CD4-positive, alpha-beta memory T cell (primary cell): ENCODE measurements at regions of chr3 and their contacts with region 1.

Region 1: GRCh38 chr3:158727206-158728060 is 4.8 kb downstream of the RARRES1 start:
- DNase-seq: peak; percentile 45 to 65 (median 63)
- H3K4me3 ChIP-seq: peak overlapping the region in 1 of 2 donors; percentile 3
- H3K4me3 Mint-ChIP-seq: peak overlapping the region in 7 of 8 donors; percentile 17 to 82 (median 62)
- H3K27ac ChIP-seq: no peak overlapping the region
- H3K27ac Mint-ChIP-seq: peak overlapping the region; percentile 37 to 98 (median 87)
- H3K4me1 ChIP-seq: peaks cover 37% of the 10 kb centered on the region
- H3K4me1 Mint-ChIP-seq: peaks cover 26 to 51% (median 43%) of the 10 kb centered on the region in 4 donors
- H3K27me3 ChIP-seq: no peaks in the 10 kb centered on the region
- H3K27me3 Mint-ChIP-seq: peaks cover 0 to 2% of the 10 kb centered on the region in 2 donors

Region 2: DNA sequence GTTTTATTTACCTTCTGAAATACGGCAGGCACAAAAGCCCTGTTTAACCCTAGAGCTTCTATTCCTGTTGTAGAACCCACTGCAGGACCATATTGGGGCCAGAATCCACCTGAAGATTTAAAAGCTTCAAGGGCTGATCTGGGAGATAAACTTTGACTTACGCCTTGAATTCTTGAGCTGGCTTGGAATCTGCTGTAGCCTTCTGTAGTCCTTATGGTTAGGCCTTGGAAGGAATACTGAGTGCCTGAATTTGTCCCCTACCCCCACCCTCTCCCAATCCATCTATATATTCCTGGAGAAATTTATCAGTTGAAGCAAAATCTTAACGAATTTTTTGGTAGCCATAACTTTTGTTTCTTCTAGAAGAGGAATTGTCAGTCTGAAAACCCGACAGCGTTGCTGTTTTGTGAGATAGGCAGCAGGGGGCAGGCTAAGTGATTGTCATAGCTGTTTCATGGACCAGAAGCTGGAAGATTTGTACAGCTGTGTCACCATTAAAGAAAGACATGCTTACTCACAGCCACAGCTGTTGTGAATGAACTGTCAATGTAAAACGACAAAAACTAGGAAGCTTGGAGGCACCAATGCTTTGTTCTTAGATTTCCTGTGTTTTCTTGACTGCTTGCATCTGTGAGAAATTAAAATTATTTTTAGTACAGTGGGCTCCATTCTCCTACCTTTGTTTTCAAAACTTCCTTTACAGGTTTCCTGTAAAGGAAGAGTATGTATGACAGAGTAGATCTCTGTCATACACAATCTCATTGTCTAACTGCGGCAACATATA is 67.8 kb before region 1 on chr3:
- CTCF ChIA-PET with region 1: interaction called, 36 read pairs
- POLR2A ChIA-PET with region 1: interaction called, 3 read pairs
- intact Hi-C with region 1: loop called (anchors 1 kb)
- DNase-seq: peak in 4 of 5 donors; percentile 48 to 55 (median 51)
- H3K4me3 ChIP-seq: no peak overlapping the region
- H3K4me3 Mint-ChIP-seq: no peak overlapping the region
- H3K27ac ChIP-seq: no peak overlapping the region
- H3K27ac Mint-ChIP-seq: peak overlapping the region in 6 of 7 donors; percentile 13 to 80 (median 37)
- H3K4me1 ChIP-seq: no peaks in the 10 kb centered on the region
- H3K4me1 Mint-ChIP-seq: peaks cover 5 to 9% (median 7%) of the 10 kb centered on the region in 4 donors
- H3K27me3 ChIP-seq: no peaks in the 10 kb centered on the region
- H3K27me3 Mint-ChIP-seq: no peaks in the 10 kb centered on the region

Region 3: GRCh38 chr3:158713094-158713499 is 14.3 kb before region 1 on chr3:
- CTCF ChIA-PET with region 1: interaction called, 15 read pairs
- POLR2A ChIA-PET with region 1: interaction called, 3 read pairs
- intact Hi-C with region 1: no loop called
- DNase-seq: no peak
- H3K4me3 ChIP-seq: no peak overlapping the region
- H3K4me3 Mint-ChIP-seq: no peak overlapping the region
- H3K27ac ChIP-seq: no peak overlapping the region
- H3K27ac Mint-ChIP-seq: peak overlapping the region in 1 of 7 donors; percentile 57
- H3K4me1 ChIP-seq: no peaks in the 10 kb centered on the region
- H3K4me1 Mint-ChIP-seq: peaks cover 0 to 8% (median 2%) of the 10 kb centered on the region in 4 donors
- H3K27me3 ChIP-seq: no peaks in the 10 kb centered on the region
- H3K27me3 Mint-ChIP-seq: no peaks in the 10 kb centered on the region

Region 4: DNA sequence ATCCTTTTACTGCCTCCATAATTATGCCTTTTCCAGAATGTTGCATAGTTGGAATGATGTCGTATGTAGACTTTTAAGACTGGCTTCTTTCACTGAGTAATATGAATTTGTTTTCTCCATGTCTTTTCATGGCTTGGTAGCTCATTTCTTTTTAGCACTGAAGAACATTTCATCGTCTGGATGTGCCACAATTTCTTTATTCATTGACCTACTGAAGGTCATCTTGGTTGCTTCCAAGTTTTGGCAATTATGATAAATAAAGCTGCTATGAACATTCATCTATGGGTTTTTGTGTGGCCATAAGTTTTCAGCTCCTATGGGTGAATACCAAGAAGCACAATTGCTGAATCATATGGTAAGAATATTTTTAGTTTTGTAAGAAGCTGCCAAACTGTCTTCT is 28.0 kb after region 1 on chr3:
- CTCF ChIA-PET with region 1: interaction called, 13 read pairs
- POLR2A ChIA-PET with region 1: no interaction called
- intact Hi-C with region 1: no loop called
- DNase-seq: no peak
- H3K4me3 ChIP-seq: no peak overlapping the region
- H3K4me3 Mint-ChIP-seq: no peak overlapping the region
- H3K27ac ChIP-seq: no peak overlapping the region
- H3K27ac Mint-ChIP-seq: peak overlapping the region in 2 of 7 donors; percentile 41 to 88
- H3K4me1 ChIP-seq: no peaks in the 10 kb centered on the region
- H3K4me1 Mint-ChIP-seq: no peaks in the 10 kb centered on the region
- H3K27me3 ChIP-seq: no peaks in the 10 kb centered on the region
- H3K27me3 Mint-ChIP-seq: no peaks in the 10 kb centered on the region

Region 5: DNA sequence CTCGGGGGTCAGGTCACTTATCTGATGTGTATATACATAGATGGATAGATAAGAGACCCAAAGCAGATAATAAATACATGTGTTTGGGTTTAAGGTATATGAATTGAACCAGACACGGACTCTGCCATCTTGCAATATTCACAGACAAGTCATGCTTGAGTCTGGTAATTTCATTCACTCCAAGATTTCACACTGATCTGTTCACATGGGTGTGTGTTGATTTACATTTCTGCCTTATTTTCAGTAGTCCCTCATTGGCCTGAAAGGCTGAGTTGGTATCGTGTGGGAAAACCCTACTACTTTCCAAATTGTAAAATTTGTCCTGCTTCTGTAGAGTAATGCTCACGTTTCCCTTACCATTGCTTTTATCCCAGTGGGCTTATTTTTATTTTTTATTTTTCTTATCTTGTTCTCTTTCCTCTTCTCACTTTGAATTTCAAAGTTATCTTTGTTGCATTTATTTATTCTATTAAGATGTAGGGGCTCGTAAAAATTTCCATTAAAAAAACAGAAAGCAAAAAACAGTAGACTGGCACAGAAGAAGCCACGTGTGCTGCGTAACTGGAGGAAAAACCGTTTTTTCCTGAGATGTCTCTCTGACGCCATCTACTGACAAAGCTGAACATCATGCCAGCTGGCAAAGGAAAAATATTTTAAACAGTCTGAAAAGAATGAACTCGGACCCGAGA is 63.6 kb after region 1 on chr3:
- CTCF ChIA-PET with region 1: interaction called, 136 read pairs
- POLR2A ChIA-PET with region 1: interaction called, 8 read pairs
- intact Hi-C with region 1: loop called (anchors 1 kb)
- DNase-seq: peak; percentile 51 to 66 (median 59)
- H3K4me3 ChIP-seq: no peak overlapping the region
- H3K4me3 Mint-ChIP-seq: peak overlapping the region; percentile 58 to 83 (median 73)
- H3K27ac ChIP-seq: no peak overlapping the region
- H3K27ac Mint-ChIP-seq: peak overlapping the region in 1 of 7 donors; percentile 36
- H3K4me1 ChIP-seq: peaks cover 7% of the 10 kb centered on the region
- H3K4me1 Mint-ChIP-seq: peaks cover 0 to 4% (median 3%) of the 10 kb centered on the region in 4 donors
- H3K27me3 ChIP-seq: no peaks in the 10 kb centered on the region
- H3K27me3 Mint-ChIP-seq: no peaks in the 10 kb centered on the region

Region 6: DNA sequence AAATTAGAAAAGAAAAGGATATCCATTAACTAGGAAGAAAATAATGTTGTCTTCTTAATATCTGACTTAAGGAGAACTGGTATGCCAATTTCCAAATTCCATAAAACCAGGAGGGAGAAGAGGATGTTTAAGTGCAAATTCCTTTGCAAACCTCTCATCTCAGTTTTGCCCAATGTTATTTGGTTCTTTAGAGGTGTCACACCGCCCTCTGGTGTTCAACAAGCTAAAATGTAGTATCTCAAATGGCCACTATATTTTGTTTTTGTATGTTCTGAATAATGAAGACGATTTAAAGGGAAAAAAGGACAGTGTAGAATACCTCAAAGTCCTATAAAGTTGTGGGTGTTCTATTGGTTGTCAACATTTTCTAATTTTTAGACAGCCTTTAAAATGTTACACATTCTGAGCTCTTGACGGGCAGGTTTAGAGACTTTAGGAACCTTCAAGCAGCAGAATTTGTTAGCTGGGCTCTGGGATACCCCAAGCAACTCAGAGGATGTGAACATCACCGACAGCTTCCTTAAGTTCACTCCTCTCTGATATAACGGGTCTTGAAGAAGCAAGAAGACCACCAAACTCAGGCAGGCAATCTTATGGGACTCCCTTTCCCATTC is 532.7 kb after region 1 on chr3:
- CTCF ChIA-PET with region 1: interaction called, 6 read pairs
- POLR2A ChIA-PET with region 1: no interaction called
- intact Hi-C with region 1: loop called (anchors 5 kb)
- DNase-seq: peak in 4 of 5 donors; percentile 7 to 25 (median 17)
- H3K4me3 ChIP-seq: no peak overlapping the region
- H3K4me3 Mint-ChIP-seq: no peak overlapping the region
- H3K27ac ChIP-seq: no peak overlapping the region
- H3K27ac Mint-ChIP-seq: no peak overlapping the region
- H3K4me1 ChIP-seq: no peaks in the 10 kb centered on the region
- H3K4me1 Mint-ChIP-seq: no peaks in the 10 kb centered on the region
- H3K27me3 ChIP-seq: no peaks in the 10 kb centered on the region
- H3K27me3 Mint-ChIP-seq: peaks cover 1 to 7% of the 10 kb centered on the region in 2 donors